ENCODE measurements at regions of chr17 and their contacts with region 1.

Region 1: DNA sequence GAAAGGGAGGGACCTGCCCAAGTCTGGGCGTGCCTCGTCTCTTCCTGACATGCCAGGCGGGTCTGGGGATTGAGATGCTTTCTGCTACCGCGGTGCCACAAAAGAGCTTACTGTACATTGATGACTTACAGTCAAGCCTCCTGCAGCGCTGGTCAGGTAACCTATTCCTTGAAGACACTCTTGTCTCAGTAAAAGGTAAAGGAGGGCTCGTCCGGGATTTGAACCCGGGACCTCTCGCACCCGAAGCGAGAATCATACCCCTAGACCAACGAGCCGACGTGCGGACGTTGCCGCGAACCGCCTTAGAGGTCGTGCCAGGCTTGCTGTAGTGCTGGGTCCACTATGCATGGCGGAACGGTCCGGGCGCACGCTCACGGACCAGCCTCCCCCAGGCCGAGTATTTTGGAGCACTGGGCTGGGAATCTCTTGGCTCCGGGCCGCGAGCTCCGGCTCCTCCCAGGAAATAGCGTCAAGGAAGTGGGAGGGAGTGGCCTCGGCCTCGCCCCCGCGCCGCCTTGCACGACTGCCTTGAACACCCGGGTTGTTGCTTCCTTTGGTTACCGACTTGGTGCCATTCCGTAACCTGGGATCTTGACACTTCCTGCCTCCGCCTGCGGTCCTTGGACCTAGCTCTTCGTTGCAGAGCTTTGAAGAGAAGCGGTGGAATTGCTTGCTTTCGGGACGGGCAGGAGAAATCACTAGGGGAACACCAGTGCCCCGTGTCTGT is 12.4 kb upstream of the AURKB start:
- DNase-seq: peak; percentile 88 to 92 (median 91)
- ATAC-seq: peak; percentile 66
- H3K4me3 ChIP-seq: peak overlapping the region; percentile 99
- H3K4me3 Mint-ChIP-seq: peak overlapping the region; percentile 86 to 99 (median 92)
- H3K27ac ChIP-seq: peak overlapping the region; percentile 83
- H3K27ac Mint-ChIP-seq: peak overlapping the region; percentile 95 to 100 (median 99)
- H3K4me1 ChIP-seq: peaks cover 23 to 26% of the 10 kb centered on the region in 2 donors
- H3K4me1 Mint-ChIP-seq: peaks cover 30 to 81% (median 70%) of the 10 kb centered on the region in 7 donors
- H3K27me3 ChIP-seq: no peaks in the 10 kb centered on the region
- H3K27me3 Mint-ChIP-seq: peaks cover 0 to 17% (median 0%) of the 10 kb centered on the region in 5 donors

Region 2: DNA sequence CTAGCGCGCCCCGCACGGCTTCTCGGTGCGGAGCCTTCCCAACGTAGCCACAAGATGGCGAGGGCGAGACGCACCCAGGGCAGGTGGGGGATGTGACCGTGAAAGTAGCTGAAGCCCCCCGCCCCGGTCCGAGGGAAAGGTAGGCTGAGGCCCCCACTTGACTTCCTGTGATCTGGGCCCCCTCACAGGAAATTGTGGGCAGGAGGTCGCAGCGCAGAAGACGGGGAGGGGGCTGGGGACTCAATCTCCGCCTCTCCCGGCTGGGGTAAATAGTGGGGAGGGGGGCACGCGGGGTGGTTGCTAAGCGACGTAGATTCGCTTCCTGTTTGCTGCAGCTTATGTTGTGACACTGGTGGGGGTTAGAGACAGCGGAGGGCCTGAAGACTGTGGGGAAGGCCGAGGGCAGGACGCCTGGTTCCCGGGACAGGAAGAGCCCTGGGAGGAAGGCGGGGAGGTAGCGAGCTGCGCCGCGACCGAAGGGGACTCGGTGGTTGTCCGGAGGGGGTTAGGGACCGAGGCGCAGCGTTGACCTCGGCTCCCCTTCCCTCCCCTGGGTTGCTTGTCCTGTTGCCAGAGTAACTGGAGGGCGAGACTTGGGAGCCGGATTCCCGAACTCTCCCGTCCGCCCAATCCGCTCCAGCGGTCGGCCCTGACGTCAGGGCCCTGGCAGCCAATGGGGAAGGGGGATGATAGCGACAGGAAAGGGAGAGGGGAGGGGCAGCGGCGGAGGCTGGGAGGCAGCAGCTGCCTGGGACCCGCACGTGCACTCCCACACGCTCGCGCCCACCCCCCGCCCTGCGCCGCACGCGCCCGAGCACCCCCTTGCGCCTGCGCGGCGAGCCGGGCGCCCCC is 387.6 kb before region 1 on chr17:
- CTCF ChIA-PET with region 1: no interaction called
- POLR2A ChIA-PET with region 1: no interaction called
- intact Hi-C with region 1: loop called in 1 of 2 experiments (anchors 1 kb)
- DNase-seq: peak; percentile 76 to 97 (median 95)
- ATAC-seq: peak; percentile 70
- H3K4me3 ChIP-seq: peak overlapping the region; percentile 96
- H3K4me3 Mint-ChIP-seq: peak overlapping the region; percentile 91 to 99 (median 96)
- H3K27ac ChIP-seq: peak overlapping the region; percentile 96
- H3K27ac Mint-ChIP-seq: peak overlapping the region; percentile 95 to 100 (median 99)
- H3K4me1 ChIP-seq: peaks cover 29 to 38% of the 10 kb centered on the region in 2 donors
- H3K4me1 Mint-ChIP-seq: peaks cover 28 to 60% (median 44%) of the 10 kb centered on the region in 7 donors
- H3K27me3 ChIP-seq: no peaks in the 10 kb centered on the region
- H3K27me3 Mint-ChIP-seq: peaks cover 0 to 28% (median 0%) of the 10 kb centered on the region in 5 donors

Region 3: GRCh38 chr17:8138672-8139371 is 84.0 kb before region 1 on chr17:
- CTCF ChIA-PET with region 1: interaction called, 15 read pairs
- POLR2A ChIA-PET with region 1: interaction called, 65 read pairs
- intact Hi-C with region 1: loop called (anchors 1 kb)
- DNase-seq: peak; percentile 93 to 99 (median 98)
- ATAC-seq: peak; percentile 90
- H3K4me3 ChIP-seq: peak overlapping the region; percentile 76
- H3K4me3 Mint-ChIP-seq: no peak overlapping the region
- H3K27ac ChIP-seq: peak overlapping the region; percentile 84
- H3K27ac Mint-ChIP-seq: no peak overlapping the region
- H3K4me1 ChIP-seq: peaks cover 8 to 17% of the 10 kb centered on the region in 2 donors
- H3K4me1 Mint-ChIP-seq: peaks cover 0 to 5% (median 0%) of the 10 kb centered on the region in 7 donors
- H3K27me3 ChIP-seq: no peaks in the 10 kb centered on the region
- H3K27me3 Mint-ChIP-seq: peaks cover 0 to 11% (median 0%) of the 10 kb centered on the region in 5 donors

Region 4: GRCh38 chr17:8173056-8173870 is 49.5 kb before region 1 on chr17:
- CTCF ChIA-PET with region 1: no interaction called
- POLR2A ChIA-PET with region 1: interaction called, 48 read pairs
- intact Hi-C with region 1: loop called (anchors 1 to 5 kb)
- DNase-seq: peak; percentile 49 to 95 (median 91)
- ATAC-seq: peak; percentile 91
- H3K4me3 ChIP-seq: peak overlapping the region; percentile 57
- H3K4me3 Mint-ChIP-seq: peak overlapping the region; percentile 80 to 96 (median 90)
- H3K27ac ChIP-seq: peak overlapping the region; percentile 92
- H3K27ac Mint-ChIP-seq: peak overlapping the region; percentile 99 to 100 (median 100)
- H3K4me1 ChIP-seq: peaks cover 26 to 39% of the 10 kb centered on the region in 2 donors
- H3K4me1 Mint-ChIP-seq: peaks cover 33 to 60% (median 52%) of the 10 kb centered on the region in 7 donors
- H3K27me3 ChIP-seq: no peaks in the 10 kb centered on the region
- H3K27me3 Mint-ChIP-seq: no peaks in the 10 kb centered on the region

Region 5: GRCh38 chr17:8237175-8237574 is 14.4 kb after region 1 on chr17:
- CTCF ChIA-PET with region 1: no interaction called
- POLR2A ChIA-PET with region 1: interaction called, 436 read pairs
- intact Hi-C with region 1: no loop called
- DNase-seq: no peak
- ATAC-seq: no peak
- H3K4me3 ChIP-seq: no peak overlapping the region
- H3K4me3 Mint-ChIP-seq: peak overlapping the region in 1 of 10 donors; percentile 23
- H3K27ac ChIP-seq: no peak overlapping the region
- H3K27ac Mint-ChIP-seq: peak overlapping the region in 3 of 9 donors; percentile 38 to 71 (median 43)
- H3K4me1 ChIP-seq: peaks cover 0 to 9% of the 10 kb centered on the region in 2 donors
- H3K4me1 Mint-ChIP-seq: peaks cover 3 to 59% (median 35%) of the 10 kb centered on the region in 7 donors
- H3K27me3 ChIP-seq: no peaks in the 10 kb centered on the region
- H3K27me3 Mint-ChIP-seq: no peaks in the 10 kb centered on the region

Region 6: DNA sequence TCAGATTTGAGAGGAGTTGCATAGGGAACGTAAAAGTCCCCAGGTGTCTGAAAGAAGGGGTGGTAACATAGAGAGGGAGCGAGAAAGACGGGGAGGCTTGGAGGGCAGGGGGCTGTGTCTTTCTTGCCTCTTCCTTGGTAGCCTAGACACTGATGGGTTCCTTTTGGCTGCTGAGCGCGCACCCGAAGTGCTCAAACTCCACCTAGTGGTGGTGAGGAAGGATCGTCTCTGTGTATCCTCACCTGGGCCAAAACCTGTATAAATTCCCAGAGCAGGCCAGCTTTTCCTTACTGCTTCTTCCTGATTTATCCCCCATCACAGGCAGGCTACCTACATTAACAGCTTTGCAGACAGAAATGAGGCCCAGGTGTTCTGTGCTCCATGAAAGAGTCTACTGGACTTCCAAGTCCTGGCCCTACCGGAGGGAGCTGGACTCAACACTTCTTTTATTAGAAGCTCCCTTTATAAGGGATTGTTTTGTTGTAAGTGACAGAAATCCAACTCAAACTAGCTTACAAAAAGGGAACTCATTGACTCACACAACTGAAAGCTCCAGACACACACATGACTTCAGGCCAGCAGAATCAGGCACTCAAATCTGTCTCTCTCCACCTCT is 77.9 kb after region 1 on chr17:
- CTCF ChIA-PET with region 1: interaction called, 12 read pairs
- POLR2A ChIA-PET with region 1: interaction called, 53 read pairs
- intact Hi-C with region 1: loop called (anchors 1 kb)
- DNase-seq: peak; percentile 33 to 80 (median 72)
- ATAC-seq: peak; percentile 95
- H3K4me3 ChIP-seq: no peak overlapping the region
- H3K4me3 Mint-ChIP-seq: peak overlapping the region in 1 of 10 donors; percentile 14
- H3K27ac ChIP-seq: no peak overlapping the region
- H3K27ac Mint-ChIP-seq: peak overlapping the region in 7 of 9 donors; percentile 6 to 80 (median 71)
- H3K4me1 ChIP-seq: peaks cover 3 to 9% of the 10 kb centered on the region in 2 donors
- H3K4me1 Mint-ChIP-seq: peaks cover 7 to 18% (median 14%) of the 10 kb centered on the region in 7 donors
- H3K27me3 ChIP-seq: no peaks in the 10 kb centered on the region
- H3K27me3 Mint-ChIP-seq: peaks cover 0 to 5% (median 0%) of the 10 kb centered on the region in 5 donors